CD8-positive, alpha-beta T cell (primary cell): ENCODE measurements at regions of chr6 and their contacts with region 1.

Region 1: DNA sequence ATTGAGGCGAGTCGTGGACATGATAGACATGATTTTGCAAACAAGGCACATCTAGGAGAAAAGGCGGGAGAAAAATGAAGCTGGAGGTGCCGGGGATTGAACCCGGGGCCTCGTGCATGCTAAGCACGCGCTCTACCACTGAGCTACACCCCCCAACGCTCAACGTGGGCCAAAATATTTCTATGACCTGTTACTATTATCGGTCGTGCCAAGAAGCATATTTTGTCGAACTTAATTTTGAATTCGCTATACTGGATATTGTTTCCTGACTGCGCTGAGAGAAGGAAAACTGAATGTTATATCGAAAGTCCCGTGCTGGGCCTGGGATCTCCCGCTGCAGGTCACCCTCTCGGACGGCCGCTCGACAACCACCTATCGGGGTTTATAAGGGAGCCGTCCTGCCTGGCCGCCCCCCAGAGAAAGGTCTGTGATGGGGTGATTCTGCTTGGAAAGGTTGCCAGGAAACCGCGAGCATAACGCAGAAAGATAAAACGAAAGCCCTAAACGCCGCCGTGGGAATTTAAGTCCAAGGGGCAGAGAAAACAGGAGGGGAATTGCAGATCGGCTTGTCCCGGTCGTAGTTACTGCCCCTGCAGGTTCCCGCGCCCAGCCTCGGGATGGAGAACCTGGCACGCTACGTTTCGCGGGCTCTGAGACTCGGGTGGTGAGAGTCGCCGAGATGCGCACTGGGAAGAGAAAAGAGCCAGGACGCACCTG is 60.0 kb downstream of the TRIM27 start:
- DNase-seq: peak; percentile 62 to 93 (median 82)
- ATAC-seq: peak; percentile 35
- H3K4me3 ChIP-seq: peak overlapping the region; percentile 80 to 92
- H3K4me3 Mint-ChIP-seq: peak overlapping the region; percentile 96
- H3K27ac ChIP-seq: peak overlapping the region; percentile 44 to 70
- H3K27ac Mint-ChIP-seq: peak overlapping the region; percentile 94
- H3K4me1 ChIP-seq: peaks cover 14% of the 10 kb centered on the region
- H3K4me1 Mint-ChIP-seq: peaks cover 45% of the 10 kb centered on the region
- H3K27me3 ChIP-seq: no peaks in the 10 kb centered on the region
- H3K27me3 Mint-ChIP-seq: no peaks in the 10 kb centered on the region
- CTCF ChIP-seq: no peak

Region 2: DNA sequence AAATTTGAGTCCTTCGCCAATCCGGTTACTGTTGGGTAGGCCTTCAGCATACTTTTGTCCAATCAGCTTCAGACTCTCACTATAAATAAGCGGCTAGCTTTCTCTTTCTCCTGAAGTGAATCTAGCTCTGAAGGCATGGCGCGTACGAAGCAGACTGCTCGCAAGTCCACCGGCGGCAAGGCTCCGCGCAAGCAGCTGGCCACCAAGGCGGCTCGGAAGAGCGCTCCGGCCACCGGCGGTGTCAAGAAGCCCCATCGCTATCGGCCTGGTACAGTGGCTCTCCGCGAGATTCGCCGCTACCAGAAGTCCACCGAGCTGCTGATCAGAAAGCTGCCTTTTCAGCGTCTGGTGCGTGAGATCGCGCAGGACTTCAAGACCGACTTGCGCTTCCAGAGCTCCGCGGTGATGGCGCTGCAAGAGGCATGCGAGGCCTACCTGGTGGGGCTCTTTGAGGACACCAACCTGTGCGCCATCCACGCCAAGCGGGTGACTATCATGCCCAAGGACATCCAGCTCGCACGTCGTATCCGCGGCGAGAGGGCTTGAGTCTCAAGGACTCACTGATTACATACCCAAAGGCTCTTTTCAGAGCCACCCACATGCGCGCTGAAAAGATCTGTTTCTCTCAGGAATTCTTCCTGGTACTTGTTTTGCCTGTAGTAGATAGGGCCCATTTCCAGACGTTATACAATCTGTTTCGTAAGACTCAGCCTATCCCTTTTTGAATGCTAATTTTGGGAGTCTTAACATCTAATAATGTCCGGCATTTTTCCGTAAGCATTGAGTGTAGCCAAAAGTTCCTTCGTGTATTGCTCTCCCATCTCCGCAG is 1053.6 kb before region 1 on chr6:
- CTCF ChIA-PET with region 1: no interaction called
- POLR2A ChIA-PET with region 1: no interaction called
- intact Hi-C with region 1: loop called in 1 of 2 experiments (anchors 10 kb)
- DNase-seq: peak; percentile 63 to 96 (median 74)
- ATAC-seq: peak; percentile 60
- H3K4me3 ChIP-seq: peak overlapping the region; percentile 52 to 65
- H3K4me3 Mint-ChIP-seq: peak overlapping the region; percentile 95
- H3K27ac ChIP-seq: peak overlapping the region; percentile 83 to 87
- H3K27ac Mint-ChIP-seq: peak overlapping the region; percentile 99
- H3K4me1 ChIP-seq: peaks cover 36% of the 10 kb centered on the region
- H3K4me1 Mint-ChIP-seq: peaks cover 57% of the 10 kb centered on the region
- H3K27me3 ChIP-seq: no peaks in the 10 kb centered on the region
- H3K27me3 Mint-ChIP-seq: no peaks in the 10 kb centered on the region
- CTCF ChIP-seq: no peak

Region 3: DNA sequence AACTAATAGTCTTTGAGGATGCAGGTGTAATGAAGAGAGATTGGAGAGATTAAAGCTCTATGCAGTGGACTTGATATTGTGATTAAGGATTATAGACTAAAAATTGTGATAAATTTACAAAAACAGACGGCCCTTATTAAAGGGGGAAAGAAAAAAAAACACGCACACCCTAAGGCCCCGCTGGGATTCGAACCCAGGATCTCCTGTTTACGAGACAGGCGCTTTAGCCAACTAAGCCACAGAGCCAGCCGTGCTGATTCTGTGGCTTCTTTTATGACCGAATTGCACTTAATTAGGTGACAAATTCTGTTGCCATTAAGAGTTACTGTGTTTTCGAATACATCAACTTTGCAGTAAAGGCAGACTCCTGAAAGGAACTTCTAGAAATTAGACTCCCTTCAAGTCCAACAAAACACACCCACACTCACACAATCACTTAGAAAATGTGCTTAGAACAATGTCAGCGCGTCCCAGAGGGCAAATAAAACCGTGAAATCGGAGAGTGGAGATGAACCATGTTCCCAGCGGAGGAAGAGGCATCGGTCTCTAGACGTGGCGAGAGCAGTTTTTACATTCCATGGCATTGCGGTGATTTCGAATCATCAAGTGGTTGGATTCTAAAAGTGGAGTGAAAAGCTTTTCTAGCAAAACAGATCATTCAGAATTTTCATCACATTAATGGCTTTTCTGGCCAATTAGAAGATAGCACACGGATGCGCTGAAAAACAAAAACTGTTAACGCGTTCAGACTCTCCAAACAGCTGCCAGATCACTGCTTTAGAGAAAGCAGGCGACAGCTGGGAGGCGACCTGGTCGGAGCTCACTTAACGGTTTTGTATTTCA is 215.5 kb before region 1 on chr6:
- CTCF ChIA-PET with region 1: no interaction called
- POLR2A ChIA-PET with region 1: no interaction called
- intact Hi-C with region 1: no loop called
- DNase-seq: peak in 4 of 9 experiments; percentile 8 to 45 (median 29)
- ATAC-seq: no peak
- H3K4me3 ChIP-seq: peak overlapping the region in 1 of 2 experiments; percentile 1
- H3K4me3 Mint-ChIP-seq: peak overlapping the region; percentile 77
- H3K27ac ChIP-seq: no peak overlapping the region
- H3K27ac Mint-ChIP-seq: no peak overlapping the region
- H3K4me1 ChIP-seq: peaks cover 12% of the 10 kb centered on the region
- H3K4me1 Mint-ChIP-seq: peaks cover 14% of the 10 kb centered on the region
- H3K27me3 ChIP-seq: peaks cover 0 to 3% of the 10 kb centered on the region in 2 experiments
- H3K27me3 Mint-ChIP-seq: peaks cover 58% of the 10 kb centered on the region
- CTCF ChIP-seq: no peak

Region 4: DNA sequence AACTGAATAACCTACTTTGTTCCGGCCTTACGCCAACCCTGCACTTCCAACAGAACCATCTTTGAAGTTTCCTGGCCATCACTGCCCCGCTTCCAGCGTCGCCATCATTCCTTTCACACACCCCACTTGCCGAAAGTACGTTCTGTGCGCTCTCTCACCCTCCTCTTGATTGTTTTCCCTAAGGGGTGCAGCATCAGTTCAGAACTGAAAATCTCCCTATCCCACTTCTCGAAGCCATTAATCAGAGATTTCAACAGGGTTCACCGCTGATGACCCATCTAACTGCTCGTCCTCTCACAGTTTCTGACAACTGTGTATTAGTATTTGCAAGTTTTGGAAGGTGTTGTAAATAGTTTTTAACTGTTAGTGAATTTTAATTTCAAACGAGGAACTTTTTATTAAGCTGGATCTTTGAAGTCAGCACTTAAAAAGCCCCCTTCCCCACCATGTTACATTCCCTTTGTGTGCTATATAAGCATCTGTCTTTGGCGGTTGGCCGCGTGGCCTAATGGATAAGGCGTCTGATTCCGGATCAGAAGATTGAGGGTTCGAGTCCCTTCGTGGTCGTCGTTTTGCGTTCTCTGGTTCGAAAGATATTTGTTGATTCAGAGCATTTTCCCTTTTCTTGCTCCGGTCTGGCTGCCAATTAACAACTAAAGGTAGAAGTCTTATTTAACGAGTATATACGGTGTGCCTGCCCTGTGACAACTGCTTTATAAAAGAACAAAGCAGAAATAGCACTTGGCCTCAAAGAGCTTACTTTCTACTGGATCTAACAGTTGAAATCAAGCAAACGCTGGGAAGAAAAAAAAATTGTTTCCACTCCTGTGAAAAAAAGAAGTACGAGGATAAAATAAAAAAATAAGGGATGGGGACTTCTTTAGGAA is 17.4 kb after region 1 on chr6:
- CTCF ChIA-PET with region 1: interaction called, 9 read pairs
- POLR2A ChIA-PET with region 1: interaction called, 49 read pairs
- intact Hi-C with region 1: loop called (anchors 1 kb)
- DNase-seq: peak; percentile 14 to 81 (median 53)
- ATAC-seq: no peak
- H3K4me3 ChIP-seq: peak overlapping the region; percentile 37 to 45
- H3K4me3 Mint-ChIP-seq: peak overlapping the region; percentile 86
- H3K27ac ChIP-seq: no peak overlapping the region
- H3K27ac Mint-ChIP-seq: peak overlapping the region; percentile 89
- H3K4me1 ChIP-seq: peaks cover 29% of the 10 kb centered on the region
- H3K4me1 Mint-ChIP-seq: peaks cover 52% of the 10 kb centered on the region
- H3K27me3 ChIP-seq: peaks cover 0 to 3% of the 10 kb centered on the region in 2 experiments
- H3K27me3 Mint-ChIP-seq: peaks cover 4% of the 10 kb centered on the region
- CTCF ChIP-seq: no peak

Region 5: GRCh38 chr6:28923318-28924102 is 59.7 kb after region 1 on chr6 and contains the start of gene TRIM27:
- CTCF ChIA-PET with region 1: interaction called, 4 read pairs
- POLR2A ChIA-PET with region 1: interaction called, 17 read pairs
- intact Hi-C with region 1: loop called (anchors 1 kb)
- DNase-seq: peak; percentile 51 to 90 (median 77)
- ATAC-seq: peak; percentile 81
- H3K4me3 ChIP-seq: peak within 1 kb of the TSS; percentile 84 to 97
- H3K4me3 Mint-ChIP-seq: peak within 1 kb of the TSS; percentile 88
- H3K27ac ChIP-seq: peak within 1 kb of the TSS; percentile 73 to 87
- H3K27ac Mint-ChIP-seq: peak within 1 kb of the TSS; percentile 94
- H3K4me1 ChIP-seq: peaks cover 33% of the 10 kb centered on the region
- H3K4me1 Mint-ChIP-seq: peaks cover 42% of the 10 kb centered on the region
- H3K27me3 ChIP-seq: no peaks in the 10 kb centered on the region
- H3K27me3 Mint-ChIP-seq: no peaks in the 10 kb centered on the region
- CTCF ChIP-seq: no peak
- total RNA-seq, gene TRIM27: 7.8 to 9.4 TPM

Region 6: GRCh38 chr6:28981833-28982475 is 118.2 kb after region 1 on chr6:
- CTCF ChIA-PET with region 1: interaction called, 3 read pairs
- POLR2A ChIA-PET with region 1: interaction called, 7 read pairs
- intact Hi-C with region 1: loop called (anchors 1 kb)
- DNase-seq: peak; percentile 43 to 89 (median 70)
- ATAC-seq: peak; percentile 69
- H3K4me3 ChIP-seq: peak overlapping the region; percentile 94 to 98
- H3K4me3 Mint-ChIP-seq: peak overlapping the region; percentile 89
- H3K27ac ChIP-seq: peak overlapping the region; percentile 14 to 59
- H3K27ac Mint-ChIP-seq: peak overlapping the region; percentile 91
- H3K4me1 ChIP-seq: peaks cover 17% of the 10 kb centered on the region
- H3K4me1 Mint-ChIP-seq: peaks cover 59% of the 10 kb centered on the region
- H3K27me3 ChIP-seq: peaks cover 0 to 6% of the 10 kb centered on the region in 2 experiments
- H3K27me3 Mint-ChIP-seq: peaks cover 34% of the 10 kb centered on the region
- CTCF ChIP-seq: no peak